Posterior cingulate gyrus (tissue), 11 donors: ENCODE measurements at regions of chr1 and their contacts with region 1.

Region 1: GRCh38 chr1:65419681-65420589 is 533 bp upstream of the LEPR start:
- DNase-seq: peak; percentile 89 to 100 (median 96)

Region 2: DNA sequence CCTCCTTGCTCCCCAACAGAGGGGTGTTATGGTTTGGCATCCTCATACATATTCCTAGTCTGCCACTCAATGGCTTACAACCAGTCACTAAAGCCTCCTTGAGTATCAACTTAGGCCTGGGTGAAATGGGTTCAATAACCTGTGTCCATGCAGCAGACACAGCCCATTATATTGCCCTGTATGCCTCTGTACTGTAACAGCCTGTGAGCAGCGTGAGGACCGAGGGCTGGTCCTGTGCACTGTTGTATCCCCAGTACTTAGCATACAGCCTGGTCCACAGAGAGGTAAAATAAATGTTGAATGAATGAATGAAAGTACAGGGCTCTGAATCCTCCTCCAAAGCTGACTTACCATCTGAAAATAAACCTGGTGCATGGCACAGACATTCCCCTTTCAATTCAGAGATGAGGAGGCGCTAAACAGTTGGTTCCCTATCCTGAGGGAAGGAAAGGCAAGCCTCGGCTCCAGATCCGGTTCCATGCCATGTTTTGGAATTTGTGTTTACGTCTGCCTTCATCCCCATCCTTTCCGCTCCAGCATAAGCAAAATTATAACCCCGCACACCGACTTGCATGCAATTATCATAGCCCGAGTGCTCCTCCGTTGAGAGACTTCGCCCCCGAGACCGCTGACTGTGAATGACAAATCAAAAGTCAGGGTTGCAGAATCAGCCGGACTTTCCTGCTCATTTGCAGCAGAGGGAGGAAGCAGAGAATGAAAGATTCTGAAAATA is 155.6 kb before region 1 on chr1:
- intact Hi-C with region 1: loop called (anchors 5 kb)
- DNase-seq: peak; percentile 49 to 94 (median 69)

Region 3: DNA sequence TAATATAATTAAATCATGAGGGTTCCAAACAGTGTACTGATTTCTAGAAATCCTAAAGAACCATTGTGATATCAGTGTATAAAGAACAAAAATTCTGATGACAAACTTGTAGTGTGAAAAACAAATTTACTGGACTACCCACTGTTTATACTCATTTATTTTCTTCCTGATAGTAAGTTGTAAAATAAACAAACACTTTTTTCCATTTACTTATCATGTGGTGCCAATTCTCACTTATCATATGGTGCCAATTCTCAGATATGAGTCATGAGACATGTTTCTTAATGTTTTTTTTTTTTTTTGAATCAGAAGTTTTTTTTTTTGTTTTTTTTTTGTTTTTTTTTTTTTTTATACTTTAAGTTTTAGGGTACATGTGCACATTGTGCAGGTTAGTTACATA is 138.3 kb after region 1 on chr1:
- intact Hi-C with region 1: no loop called
- DNase-seq: no peak